Adrenal gland (tissue), 19 donors: ENCODE measurements at regions of chr16 and their contacts with region 1.

Region 1: DNA sequence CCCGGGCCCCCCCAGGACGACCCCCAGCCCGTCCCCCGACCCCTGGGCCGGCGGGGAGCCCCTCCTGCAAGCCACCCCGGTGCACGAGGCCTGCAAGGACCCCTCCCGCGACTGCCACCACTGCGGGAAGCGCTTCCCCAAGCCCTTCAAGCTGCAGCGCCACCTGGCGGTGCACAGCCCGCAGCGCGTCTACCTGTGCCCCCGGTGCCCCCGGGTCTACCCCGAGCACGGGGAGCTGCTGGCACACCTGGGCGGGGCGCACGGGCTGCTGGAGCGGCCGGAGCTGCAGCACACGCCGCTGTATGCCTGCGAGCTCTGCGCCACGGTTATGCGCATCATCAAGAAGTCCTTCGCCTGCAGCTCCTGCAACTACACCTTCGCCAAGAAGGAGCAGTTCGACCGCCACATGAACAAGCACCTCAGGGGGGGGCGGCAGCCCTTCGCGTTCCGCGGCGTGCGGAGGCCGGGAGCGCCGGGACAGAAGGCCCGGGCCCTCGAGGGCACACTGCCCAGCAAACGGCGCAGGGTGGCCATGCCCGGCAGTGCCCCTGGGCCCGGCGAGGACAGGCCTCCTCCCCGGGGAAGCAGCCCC is 15.6 kb upstream of the ZFPM1 start:
- DNase-seq: peak in 5 of 7 donors; percentile 46 to 68 (median 56)
- H3K4me3 ChIP-seq: no peak overlapping the region
- H3K27ac ChIP-seq: no peak overlapping the region
- H3K4me1 ChIP-seq: no peaks in the 10 kb centered on the region
- H3K27me3 ChIP-seq: peaks cover 4% of the 10 kb centered on the region
- CTCF ChIP-seq: peak; percentile 71 to 91 (median 82)
- POLR2A ChIP-seq: no peak

Region 2: DNA sequence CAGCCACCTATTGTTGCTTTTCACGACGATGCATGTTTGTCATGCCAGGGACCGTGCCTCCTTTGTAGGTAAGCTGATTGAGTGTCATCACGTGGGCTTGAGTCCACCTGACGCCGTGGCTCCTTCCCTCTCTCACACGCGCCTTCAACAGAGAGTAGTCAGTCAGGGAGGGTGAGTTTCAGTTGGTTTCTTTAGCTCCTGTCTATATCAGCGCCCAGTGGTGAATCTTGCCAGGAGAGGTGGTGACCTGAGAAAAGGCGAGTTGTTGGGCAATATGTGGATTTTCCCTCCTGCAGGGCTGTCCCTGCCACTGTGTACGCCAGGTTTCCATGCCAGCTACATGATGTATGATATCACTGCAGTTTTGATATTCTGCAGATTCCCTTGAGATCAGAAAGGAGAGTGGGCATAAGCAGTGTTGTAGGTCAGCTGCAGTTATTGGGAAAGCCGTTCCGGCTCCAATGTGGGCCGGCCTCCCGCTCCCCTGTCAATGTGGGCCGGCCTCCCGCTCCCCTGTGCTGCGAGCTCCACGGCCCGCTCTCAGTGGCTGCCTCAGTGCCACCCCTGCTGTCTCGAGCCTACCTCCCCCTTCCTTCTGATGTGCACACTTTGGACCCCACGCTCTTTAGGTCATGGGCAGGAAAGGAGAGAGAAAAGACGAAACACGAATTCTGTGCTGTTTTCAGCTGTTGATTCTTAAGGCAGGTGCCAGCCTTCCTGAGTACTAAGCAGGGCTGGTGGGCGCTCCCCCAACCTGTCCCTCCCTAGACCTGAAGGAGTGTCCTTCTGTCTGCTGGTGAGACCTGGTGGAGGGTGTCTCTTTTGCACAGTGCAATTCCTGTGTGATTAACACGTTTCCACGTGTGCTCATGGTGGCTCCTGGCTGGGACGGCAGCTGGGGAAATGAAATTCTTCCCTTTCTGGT is 454.7 kb before region 1 on chr16:
- intact Hi-C with region 1: loop called in 1 of 2 experiments (anchors 5 kb)
- DNase-seq: peak in 1 of 7 donors; percentile 8
- H3K4me3 ChIP-seq: no peak overlapping the region
- H3K27ac ChIP-seq: no peak overlapping the region
- H3K4me1 ChIP-seq: peaks cover 0 to 6% of the 10 kb centered on the region in 2 donors
- H3K27me3 ChIP-seq: no peaks in the 10 kb centered on the region
- CTCF ChIP-seq: no peak
- POLR2A ChIP-seq: no peak

Region 3: DNA sequence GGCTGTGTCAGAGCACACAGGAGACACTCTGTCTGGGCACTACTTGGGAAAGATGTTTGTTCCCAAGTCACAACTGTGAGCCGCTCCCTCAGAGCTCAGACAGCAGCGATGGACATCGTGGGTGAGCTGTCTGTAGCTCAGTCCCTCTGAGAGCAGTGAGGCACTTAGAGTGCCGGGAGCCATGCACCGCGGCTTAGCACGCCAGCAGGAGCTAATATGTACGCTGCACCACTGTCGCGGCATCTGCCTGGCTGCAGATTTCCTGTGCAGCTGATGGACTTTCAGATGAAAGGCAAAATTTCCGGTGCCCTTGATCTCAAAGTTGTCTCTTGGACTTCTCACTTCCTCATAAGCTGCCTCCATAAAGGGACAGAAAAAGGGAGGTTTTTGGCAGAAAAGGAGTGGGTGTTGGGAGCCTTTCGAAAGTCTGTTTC is 147.5 kb before region 1 on chr16:
- intact Hi-C with region 1: loop called in 1 of 2 experiments (anchors 5 kb)
- DNase-seq: no peak
- H3K4me3 ChIP-seq: no peak overlapping the region
- H3K27ac ChIP-seq: no peak overlapping the region
- H3K4me1 ChIP-seq: no peaks in the 10 kb centered on the region
- H3K27me3 ChIP-seq: no peaks in the 10 kb centered on the region
- CTCF ChIP-seq: no peak
- POLR2A ChIP-seq: no peak

Region 4: DNA sequence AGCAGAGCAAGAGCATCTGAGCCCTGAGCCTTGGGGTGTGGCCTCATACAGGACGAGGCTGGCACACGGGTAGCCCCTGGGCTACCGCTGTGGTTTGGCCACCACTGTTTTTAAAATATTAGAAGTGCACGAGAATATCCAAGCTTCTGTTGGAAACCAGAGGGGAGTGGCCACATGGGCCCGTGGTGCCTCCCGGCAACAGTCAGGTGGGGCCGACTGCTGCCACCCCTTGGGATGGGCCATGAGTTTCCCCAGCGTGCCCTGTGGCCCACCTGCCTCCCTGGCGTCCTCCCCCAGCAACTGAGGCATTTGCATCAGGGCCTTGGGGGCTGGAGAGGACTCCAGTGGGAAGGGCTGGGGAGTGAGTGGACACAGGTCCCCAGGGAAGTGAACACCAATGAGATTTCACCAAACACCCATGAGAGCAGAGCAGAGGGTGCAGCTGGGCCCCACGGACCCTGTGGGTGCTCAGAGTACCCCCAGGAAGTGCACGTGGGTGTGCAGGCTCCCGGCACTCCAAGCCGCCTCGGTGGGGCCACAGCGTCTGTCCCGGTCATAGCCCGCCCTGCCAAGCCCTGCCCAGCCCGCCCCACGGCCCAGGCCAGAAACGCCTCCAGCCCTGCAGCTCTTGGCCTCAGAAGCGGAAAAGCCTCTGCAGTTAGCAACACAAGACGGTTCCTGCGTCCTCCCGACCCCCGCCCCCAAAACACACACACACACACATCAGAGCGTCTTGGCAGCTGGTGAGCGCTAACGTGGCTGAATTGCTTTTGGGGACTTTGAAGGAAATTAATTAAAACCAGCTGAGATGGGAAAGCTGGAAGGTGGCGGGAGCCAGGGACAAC is 32.0 kb before region 1 on chr16:
- intact Hi-C with region 1: no loop called
- DNase-seq: no peak
- H3K4me3 ChIP-seq: no peak overlapping the region
- H3K27ac ChIP-seq: no peak overlapping the region
- H3K4me1 ChIP-seq: no peaks in the 10 kb centered on the region
- H3K27me3 ChIP-seq: no peaks in the 10 kb centered on the region
- CTCF ChIP-seq: no peak
- POLR2A ChIP-seq: no peak